ENCODE measurements at regions of chr18 and their contacts with region 1.

Region 1: GRCh38 chr18:31206787-31207381 is 44.2 kb upstream of the DSC1 start:
- DNase-seq: peak; percentile 86
- ATAC-seq: peak; percentile 90
- H3K4me3 ChIP-seq: peak overlapping the region; percentile 55 to 67 (median 59)
- H3K27ac ChIP-seq: no peak overlapping the region
- H3K4me1 ChIP-seq: peaks cover 65% of the 10 kb centered on the region
- H3K27me3 ChIP-seq: no peaks in the 10 kb centered on the region; a peak in 1 of 5 replicates
- CTCF ChIP-seq: peak; percentile 48
- EP300 ChIP-seq: 0 out of 4 replicates have a peak, but pooled peaks of 1 of the 2 experiments have one; percentile 8
- POLR2A ChIP-seq: peak; percentile 45 to 46; a peak in 2 of 4 replicates
- RAD21 ChIP-seq: no peak

Region 2: GRCh38 chr18:30652387-30652786 is 554.5 kb before region 1 on chr18:
- CTCF ChIA-PET with region 1: no interaction called
- POLR2A ChIA-PET with region 1: no interaction called
- in situ Hi-C with region 1: no loop called
- intact Hi-C with region 1: no loop called
- DNase-seq: no peak
- ATAC-seq: no peak
- H3K4me3 ChIP-seq: no peak overlapping the region
- H3K27ac ChIP-seq: no peak overlapping the region
- H3K4me1 ChIP-seq: no peaks in the 10 kb centered on the region
- H3K27me3 ChIP-seq: no peaks in the 10 kb centered on the region
- CTCF ChIP-seq: no peak
- EP300 ChIP-seq: no peak
- POLR2A ChIP-seq: no peak
- RAD21 ChIP-seq: no peak

Region 3: GRCh38 chr18:31101183-31102024 is 105.5 kb before region 1 on chr18:
- CTCF ChIA-PET with region 1: no interaction called
- POLR2A ChIA-PET with region 1: interaction called, 6 read pairs
- in situ Hi-C with region 1: no loop called
- intact Hi-C with region 1: loop called (anchors 1 kb)
- DNase-seq: peak; percentile 37
- ATAC-seq: peak; percentile 89
- H3K4me3 ChIP-seq: peak overlapping the region; percentile 79 to 90 (median 90)
- H3K27ac ChIP-seq: peak overlapping the region; percentile 97
- H3K4me1 ChIP-seq: peaks cover 31% of the 10 kb centered on the region
- H3K27me3 ChIP-seq: no peaks in the 10 kb centered on the region; a peak in 1 of 5 replicates
- CTCF ChIP-seq: peak; percentile 63
- EP300 ChIP-seq: no peak
- POLR2A ChIP-seq: peak; percentile 67 to 72
- RAD21 ChIP-seq: no peak

Region 4: GRCh38 chr18:31233621-31234275 is 26.9 kb after region 1 on chr18:
- CTCF ChIA-PET with region 1: no interaction called
- POLR2A ChIA-PET with region 1: no interaction called
- in situ Hi-C with region 1: no loop called
- intact Hi-C with region 1: loop called (anchors 2 kb)
- DNase-seq: peak; percentile 44
- ATAC-seq: peak; percentile 64
- H3K4me3 ChIP-seq: peak overlapping the region; percentile 1 to 58 (median 11); a peak in 4 of 6 replicates
- H3K27ac ChIP-seq: peak overlapping the region; percentile 57
- H3K4me1 ChIP-seq: peaks cover 56% of the 10 kb centered on the region
- H3K27me3 ChIP-seq: no peaks in the 10 kb centered on the region
- CTCF ChIP-seq: no peak
- EP300 ChIP-seq: no peak
- POLR2A ChIP-seq: no peak
- RAD21 ChIP-seq: no peak

Region 5: GRCh38 chr18:31267823-31268481 is 61.1 kb after region 1 on chr18:
- CTCF ChIA-PET with region 1: no interaction called
- POLR2A ChIA-PET with region 1: interaction called, 3 read pairs
- in situ Hi-C with region 1: no loop called
- intact Hi-C with region 1: loop called (anchors 10 kb)
- DNase-seq: no peak
- ATAC-seq: no peak
- H3K4me3 ChIP-seq: no peak overlapping the region
- H3K27ac ChIP-seq: no peak overlapping the region
- H3K4me1 ChIP-seq: peaks cover 19% of the 10 kb centered on the region
- H3K27me3 ChIP-seq: no peaks in the 10 kb centered on the region; a peak in 1 of 5 replicates
- CTCF ChIP-seq: no peak
- EP300 ChIP-seq: no peak
- POLR2A ChIP-seq: no peak
- RAD21 ChIP-seq: no peak

Region 6: GRCh38 chr18:31512203-31512764 is 305.4 kb after region 1 on chr18:
- CTCF ChIA-PET with region 1: no interaction called
- POLR2A ChIA-PET with region 1: interaction called, 3 read pairs
- in situ Hi-C with region 1: no loop called
- intact Hi-C with region 1: loop called (anchors 5 kb)
- DNase-seq: peak; percentile 97
- ATAC-seq: peak; percentile 93
- H3K4me3 ChIP-seq: no peak overlapping the region; a peak in 1 of 6 replicates
- H3K27ac ChIP-seq: peak overlapping the region; percentile 66
- H3K4me1 ChIP-seq: peaks cover 58% of the 10 kb centered on the region
- H3K27me3 ChIP-seq: no peaks in the 10 kb centered on the region
- CTCF ChIP-seq: no peak
- EP300 ChIP-seq: peak; percentile 93 to 94; a peak in 3 of 4 replicates
- POLR2A ChIP-seq: no peak
- RAD21 ChIP-seq: no peak

Region 7: DNA sequence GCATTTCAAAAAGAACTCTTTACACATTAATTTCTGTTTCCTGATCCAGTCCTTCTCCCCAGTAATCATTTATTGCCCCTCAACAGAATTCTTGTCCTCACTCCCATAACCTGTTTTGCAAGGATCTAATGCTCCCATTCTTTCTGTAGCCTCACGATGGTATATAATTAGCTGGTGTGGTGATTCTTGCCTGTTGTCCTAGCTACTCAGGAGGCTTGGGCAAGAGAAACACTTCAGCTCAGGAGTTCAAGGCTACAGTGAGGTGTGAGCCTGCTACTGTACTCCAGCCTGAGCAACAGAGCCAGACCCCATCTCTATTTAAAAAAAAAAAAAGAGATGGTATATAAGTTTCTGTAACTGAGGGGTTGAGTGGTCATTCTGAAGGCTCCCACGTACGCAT is 743.7 kb after region 1 on chr18:
- CTCF ChIA-PET with region 1: no interaction called
- POLR2A ChIA-PET with region 1: no interaction called
- in situ Hi-C with region 1: no loop called
- intact Hi-C with region 1: no loop called
- DNase-seq: no peak
- ATAC-seq: peak; percentile 52
- H3K4me3 ChIP-seq: no peak overlapping the region
- H3K27ac ChIP-seq: no peak overlapping the region
- H3K4me1 ChIP-seq: peaks cover 42% of the 10 kb centered on the region
- H3K27me3 ChIP-seq: no peaks in the 10 kb centered on the region
- CTCF ChIP-seq: no peak
- EP300 ChIP-seq: no peak
- POLR2A ChIP-seq: no peak
- RAD21 ChIP-seq: no peak